OCI-LY7 (cell line): ENCODE measurements at regions of chr1 and their contacts with region 1.

Region 1: GRCh38 chr1:169794530-169795416 is at the start of gene METTL18:
- DNase-seq: peak; percentile 95
- H3K4me3 ChIP-seq: peak within 1 kb of the TSS; percentile 85
- H3K27ac ChIP-seq: peak within 1 kb of the TSS; percentile 59
- H3K4me1 ChIP-seq: peaks cover 43% of the 10 kb centered on the region
- CTCF ChIP-seq: peak; percentile 71
- total RNA-seq, gene METTL18: 10.6 and 12.6 TPM in 2 replicates

Region 2: GRCh38 chr1:169367486-169368405 is 427.0 kb before region 1 on chr1 and contains the starts of genes BLZF1 and NME7:
- CTCF ChIA-PET with region 1: no interaction called
- POLR2A ChIA-PET with region 1: interaction called, 3 read pairs
- intact Hi-C with region 1: loop called (anchors 10 kb)
- DNase-seq: peak; percentile 97
- H3K4me3 ChIP-seq: peak within 1 kb of the TSS; percentile 95
- H3K27ac ChIP-seq: peak within 1 kb of the TSS; percentile 74
- H3K4me1 ChIP-seq: peaks cover 20% of the 10 kb centered on the region
- CTCF ChIP-seq: no peak
- total RNA-seq, gene BLZF1: 4.9 and 7.1 TPM in 2 replicates
- total RNA-seq, gene NME7: 4.2 and 9.3 TPM in 2 replicates

Region 3: GRCh38 chr1:169485544-169486278 is 309.1 kb before region 1 on chr1 and contains the start of gene SLC19A2:
- CTCF ChIA-PET with region 1: no interaction called
- POLR2A ChIA-PET with region 1: no interaction called
- intact Hi-C with region 1: loop called (anchors 2 kb)
- DNase-seq: peak; percentile 96
- H3K4me3 ChIP-seq: peak within 1 kb of the TSS; percentile 76
- H3K27ac ChIP-seq: no peak within 1 kb of the TSS
- H3K4me1 ChIP-seq: peaks cover 10% of the 10 kb centered on the region
- CTCF ChIP-seq: peak; percentile 24
- total RNA-seq, gene SLC19A2: 3.2 TPM in 2 replicates

Region 4: GRCh38 chr1:169680377-169681019 is 114.3 kb before region 1 on chr1:
- CTCF ChIA-PET with region 1: no interaction called
- POLR2A ChIA-PET with region 1: interaction called, 15 read pairs
- intact Hi-C with region 1: loop called (anchors 5 kb)
- DNase-seq: peak; percentile 67
- H3K4me3 ChIP-seq: peak overlapping the region; percentile 45
- H3K27ac ChIP-seq: peak overlapping the region; percentile 75
- H3K4me1 ChIP-seq: peaks cover 68% of the 10 kb centered on the region
- CTCF ChIP-seq: no peak

Region 5: DNA sequence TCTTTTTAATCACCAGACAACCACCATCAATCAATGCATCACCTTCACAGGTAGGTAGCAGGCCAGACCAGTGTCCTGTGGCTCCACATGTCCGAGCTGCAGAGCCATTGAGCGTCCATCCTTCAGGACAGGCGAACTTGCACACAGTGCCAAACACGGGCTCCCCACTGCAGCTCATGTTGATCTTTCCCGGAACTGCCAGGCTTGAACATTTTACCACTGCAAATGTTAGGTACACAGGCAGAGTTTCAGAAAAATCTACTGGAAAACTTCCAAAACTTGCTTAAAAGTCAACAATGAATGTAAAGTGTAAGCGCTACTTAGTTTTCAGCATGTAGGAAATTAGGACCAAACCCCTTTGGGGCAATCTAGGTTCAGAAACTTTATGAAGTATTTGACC is 67.5 kb before region 1 on chr1:
- CTCF ChIA-PET with region 1: no interaction called
- POLR2A ChIA-PET with region 1: no interaction called
- intact Hi-C with region 1: no loop called
- DNase-seq: no peak
- H3K4me3 ChIP-seq: no peak overlapping the region
- H3K27ac ChIP-seq: no peak overlapping the region
- H3K4me1 ChIP-seq: no peaks in the 10 kb centered on the region
- CTCF ChIP-seq: no peak

Region 6: DNA sequence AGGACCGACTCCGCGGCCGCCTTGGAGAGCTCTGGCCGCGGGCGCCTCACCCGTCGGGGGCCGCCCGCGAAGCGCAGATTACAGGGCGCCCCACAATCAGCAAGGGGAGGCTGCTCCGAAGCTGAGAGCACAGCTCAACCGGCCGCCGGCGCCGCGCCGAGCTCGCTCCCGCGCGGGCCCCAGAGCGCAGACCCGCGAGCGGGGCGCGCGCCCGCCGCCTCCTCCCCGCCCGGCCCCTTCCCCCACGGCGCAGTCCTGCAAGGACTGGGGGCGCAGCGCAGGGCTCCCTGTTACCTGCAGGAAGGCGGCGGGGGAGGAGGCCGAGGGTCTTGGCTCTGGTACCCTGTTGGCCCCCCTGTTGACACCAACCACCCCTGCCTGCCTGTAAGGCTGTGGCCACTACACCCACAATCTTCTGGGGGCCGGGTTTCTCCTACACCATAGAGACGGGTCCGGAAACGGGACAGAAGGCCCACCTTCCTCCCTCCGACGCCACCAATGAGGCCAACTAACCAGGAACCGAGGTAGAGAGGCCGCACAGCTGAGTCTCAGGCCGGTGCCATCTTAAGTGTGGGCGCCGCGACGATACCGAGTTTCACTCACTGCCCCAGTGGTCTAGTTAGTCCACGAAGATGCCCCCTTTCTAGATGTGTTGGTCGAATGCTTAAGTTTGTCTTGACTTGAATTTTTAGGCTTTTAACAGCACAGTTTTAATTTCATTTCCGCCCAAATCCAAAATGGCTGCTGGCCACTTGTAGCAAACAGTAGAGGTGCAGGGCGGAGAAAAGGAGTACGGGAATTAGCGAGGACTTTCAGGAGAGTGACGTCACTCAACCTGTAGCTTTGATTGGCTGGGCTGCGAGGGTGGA is 99.0 kb after region 1 on chr1 and contains the start of gene SCYL3:
- CTCF ChIA-PET with region 1: no interaction called
- POLR2A ChIA-PET with region 1: interaction called, 24 read pairs
- intact Hi-C with region 1: loop called (anchors 1 kb)
- DNase-seq: peak; percentile 98
- H3K4me3 ChIP-seq: peak within 1 kb of the TSS; percentile 81
- H3K27ac ChIP-seq: peak within 1 kb of the TSS; percentile 64
- H3K4me1 ChIP-seq: peaks cover 27% of the 10 kb centered on the region
- CTCF ChIP-seq: no peak
- total RNA-seq, gene SCYL3: 5.9 and 7.3 TPM in 2 replicates

Region 7: GRCh38 chr1:170074250-170075157 is 279.7 kb after region 1 on chr1 and contains the start of gene KIFAP3:
- CTCF ChIA-PET with region 1: no interaction called
- POLR2A ChIA-PET with region 1: no interaction called
- intact Hi-C with region 1: loop called (anchors 2 kb)
- DNase-seq: peak; percentile 97
- H3K4me3 ChIP-seq: peak within 1 kb of the TSS; percentile 78
- H3K27ac ChIP-seq: peak within 1 kb of the TSS; percentile 28
- H3K4me1 ChIP-seq: peaks cover 23% of the 10 kb centered on the region
- CTCF ChIP-seq: peak; percentile 71
- total RNA-seq, gene KIFAP3: 10.5 and 10.6 TPM in 2 replicates

Region 8: GRCh38 chr1:170531758-170532657 is 737.2 kb after region 1 on chr1 and contains the start of gene GORAB:
- CTCF ChIA-PET with region 1: no interaction called
- POLR2A ChIA-PET with region 1: no interaction called
- intact Hi-C with region 1: loop called (anchors 10 kb)
- DNase-seq: peak; percentile 90
- H3K4me3 ChIP-seq: peak within 1 kb of the TSS; percentile 97
- H3K27ac ChIP-seq: peak within 1 kb of the TSS; percentile 68
- H3K4me1 ChIP-seq: peaks cover 16% of the 10 kb centered on the region
- CTCF ChIP-seq: no peak
- total RNA-seq, gene GORAB: 11.5 and 19.8 TPM in 2 replicates